ENCODE measurements at regions of chr9 and their contacts with region 1.

Region 1: GRCh38 chr9:114216081-114216480 is 60.7 kb downstream of the COL27A1 start:
- DNase-seq: peak; percentile 37 to 87
- H3K4me3 ChIP-seq: no peak overlapping the region
- H3K27ac ChIP-seq: peak overlapping the region; percentile 1 to 34
- H3K4me1 ChIP-seq: peaks cover 0 to 30% (median 28%) of the 10 kb centered on the region in 4 donors
- H3K27me3 ChIP-seq: no peaks in the 10 kb centered on the region
- CTCF ChIP-seq: no peak

Region 2: DNA sequence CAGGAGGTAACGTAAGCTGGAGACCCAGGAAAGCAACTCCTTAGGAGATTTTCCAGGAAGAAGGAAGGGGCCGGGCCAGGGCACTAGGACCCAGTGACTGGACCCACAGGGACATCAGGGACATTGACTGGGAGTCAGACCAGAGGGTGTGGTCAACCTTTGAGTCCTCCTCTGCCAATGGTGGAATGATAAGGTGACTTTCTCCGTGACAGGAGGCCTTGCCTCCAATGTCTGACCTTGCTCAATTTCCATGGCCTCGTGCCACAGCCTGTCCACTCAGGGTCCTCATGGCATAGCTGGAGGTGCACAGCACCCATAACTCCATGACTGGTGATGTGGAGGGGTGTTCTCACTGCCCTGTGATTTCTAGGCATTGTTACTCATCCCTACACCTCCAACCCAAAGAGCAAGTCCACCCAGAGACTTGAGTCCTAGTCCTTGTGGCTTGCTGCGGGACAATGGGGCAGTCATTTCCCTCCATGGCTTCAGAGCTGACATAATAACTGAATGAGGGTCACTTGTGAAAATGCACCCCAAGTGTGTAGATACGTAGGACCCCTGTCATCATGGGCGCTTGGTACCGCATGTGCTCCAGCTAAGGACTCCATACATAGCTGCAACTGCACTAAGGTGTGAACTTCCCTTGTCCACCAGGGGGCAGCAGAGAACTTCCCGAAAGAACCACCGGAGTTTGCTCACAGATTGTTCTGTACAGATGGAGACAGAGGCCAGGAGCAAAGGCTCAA is 133.9 kb before region 1 on chr9:
- intact Hi-C with region 1: no loop called
- DNase-seq: peak; percentile 90 to 92
- H3K4me3 ChIP-seq: no peak overlapping the region
- H3K27ac ChIP-seq: no peak overlapping the region
- H3K4me1 ChIP-seq: peaks cover 0 to 13% (median 2%) of the 10 kb centered on the region in 4 donors
- H3K27me3 ChIP-seq: no peaks in the 10 kb centered on the region
- CTCF ChIP-seq: peak; percentile 90 to 93

Region 3: DNA sequence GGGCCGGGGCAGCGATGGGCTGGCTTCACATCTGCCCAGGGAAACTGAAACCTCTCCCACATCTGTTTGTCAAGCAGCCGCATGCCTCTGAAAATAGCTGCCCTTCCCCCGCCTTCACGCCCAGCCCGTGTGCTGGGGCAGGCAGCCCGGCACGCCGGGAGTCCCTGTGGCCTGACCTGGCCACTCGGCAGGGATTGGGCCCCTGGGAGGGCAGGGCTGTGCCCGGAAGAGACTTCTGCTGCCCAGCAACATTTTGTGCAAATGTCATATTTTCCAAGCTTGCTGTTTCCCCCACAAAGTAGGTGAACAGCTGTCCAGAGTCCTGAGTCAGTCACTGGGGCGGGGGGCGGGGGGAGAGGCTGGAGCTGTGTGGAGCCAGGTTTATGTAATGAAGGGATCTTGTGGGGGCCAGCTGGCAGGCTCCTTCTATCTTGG is 52.5 kb before region 1 on chr9:
- intact Hi-C with region 1: loop called (anchors 10 kb)
- DNase-seq: peak; percentile 56 to 89
- H3K4me3 ChIP-seq: peak overlapping the region; percentile 29 to 43
- H3K27ac ChIP-seq: peak overlapping the region; percentile 53 to 59
- H3K4me1 ChIP-seq: peaks cover 0 to 47% (median 37%) of the 10 kb centered on the region in 4 donors
- H3K27me3 ChIP-seq: no peaks in the 10 kb centered on the region
- CTCF ChIP-seq: no peak

Region 4: GRCh38 chr9:114366334-114367128 is 150.4 kb after region 1 on chr9:
- intact Hi-C with region 1: no loop called
- DNase-seq: no peak
- H3K4me3 ChIP-seq: no peak overlapping the region
- H3K27ac ChIP-seq: peak overlapping the region; percentile 49 to 57
- H3K4me1 ChIP-seq: peaks cover 0 to 20% (median 15%) of the 10 kb centered on the region in 4 donors
- H3K27me3 ChIP-seq: no peaks in the 10 kb centered on the region
- CTCF ChIP-seq: no peak